ENCODE measurements at regions of chr1 and their contacts with region 1.

Region 1: DNA sequence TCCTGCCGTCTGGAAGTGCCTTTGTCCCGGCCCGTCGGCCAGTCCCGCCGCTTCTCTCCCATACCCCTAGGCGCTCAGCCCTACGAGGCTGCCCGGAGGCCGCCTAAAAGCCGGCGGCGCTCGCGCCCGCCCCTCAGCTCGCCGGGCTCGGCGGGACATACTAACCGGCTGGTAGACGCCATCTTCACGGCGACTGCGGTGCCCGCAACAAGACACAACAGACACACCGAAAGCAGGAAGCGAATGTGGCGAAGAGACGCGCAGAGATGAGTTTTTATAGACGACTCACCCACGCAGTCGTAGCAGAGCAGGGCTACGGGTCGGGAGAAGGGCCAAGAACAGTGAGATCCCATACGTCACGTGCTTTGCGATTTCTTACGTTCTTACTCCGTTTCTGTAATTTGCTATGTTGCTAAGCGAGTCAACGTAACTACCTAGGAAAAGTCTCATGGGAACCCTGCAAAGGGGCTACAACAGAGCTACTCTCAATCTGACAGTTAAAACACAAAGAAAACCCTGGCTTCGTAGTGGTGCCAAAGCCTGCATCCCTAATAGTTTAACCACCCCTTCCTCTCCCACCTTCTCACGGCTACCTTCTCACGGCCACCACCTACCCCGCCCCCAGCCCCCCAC is at the start of gene GTF2B:
- DNase-seq: peak; percentile 98
- ATAC-seq: peak; percentile 92
- H3K4me3 ChIP-seq: peak within 1 kb of the TSS; percentile 84 to 99 (median 89)
- H3K4me3 Mint-ChIP-seq: peak within 1 kb of the TSS; percentile 95
- H3K27ac ChIP-seq: peak within 1 kb of the TSS; percentile 83 to 89
- H3K27ac Mint-ChIP-seq: peak within 1 kb of the TSS; percentile 97
- H3K4me1 ChIP-seq: peaks cover 19 to 28% of the 10 kb centered on the region in 2 donors
- H3K4me1 Mint-ChIP-seq: peaks cover 39% of the 10 kb centered on the region
- H3K27me3 ChIP-seq: no peaks in the 10 kb centered on the region
- H3K27me3 Mint-ChIP-seq: no peaks in the 10 kb centered on the region
- CTCF ChIP-seq: no peak
- total RNA-seq, gene GTF2B: 32.0 and 36.8 TPM in 2 replicates

Region 2: DNA sequence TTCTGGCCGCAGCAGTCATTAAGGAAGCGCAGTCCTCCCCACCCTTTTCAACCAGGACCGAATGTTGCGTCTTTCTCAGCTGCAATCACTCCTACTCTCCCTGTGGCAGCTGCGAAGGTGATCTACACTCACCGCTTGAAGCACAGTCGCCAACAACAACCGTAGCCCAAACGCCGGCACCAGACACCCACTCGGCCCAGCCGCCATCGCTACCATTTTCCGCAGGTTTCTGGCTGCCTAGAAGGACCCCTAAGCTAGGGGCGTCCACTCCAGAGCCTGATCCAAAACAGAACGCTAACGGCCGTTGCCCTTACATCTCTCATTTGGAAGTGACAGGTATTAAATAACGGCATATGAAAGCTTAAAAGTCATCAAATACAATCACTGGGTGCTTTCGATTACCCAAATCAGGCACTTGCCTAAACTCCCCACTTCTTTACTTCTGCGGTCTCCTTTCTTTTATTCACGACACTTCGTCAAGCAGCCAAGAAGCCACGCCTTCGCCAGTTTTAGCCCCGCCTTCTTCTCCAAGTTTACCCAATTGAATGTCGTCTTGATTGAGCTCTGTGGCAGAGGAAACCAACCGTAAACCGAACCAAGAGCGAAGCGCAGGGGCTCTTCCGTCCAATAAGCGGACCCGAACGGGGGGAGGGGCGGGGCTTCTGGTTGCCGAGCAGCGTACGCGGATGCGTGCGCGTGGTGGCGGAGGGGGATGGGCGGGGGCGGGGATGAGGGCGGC is 1977.4 kb before region 1 on chr1 and contains the start of gene SELENOF:
- CTCF ChIA-PET with region 1: no interaction called
- POLR2A ChIA-PET with region 1: no interaction called
- intact Hi-C with region 1: loop called (anchors 2 kb)
- DNase-seq: peak; percentile 100
- ATAC-seq: peak; percentile 87
- H3K4me3 ChIP-seq: peak within 1 kb of the TSS; percentile 91 to 100 (median 94)
- H3K4me3 Mint-ChIP-seq: no peak within 1 kb of the TSS
- H3K27ac ChIP-seq: peak within 1 kb of the TSS; percentile 94 to 97
- H3K27ac Mint-ChIP-seq: no peak within 1 kb of the TSS
- H3K4me1 ChIP-seq: peaks cover 31 to 34% of the 10 kb centered on the region in 2 donors
- H3K4me1 Mint-ChIP-seq: peaks cover 48% of the 10 kb centered on the region
- H3K27me3 ChIP-seq: no peaks in the 10 kb centered on the region
- H3K27me3 Mint-ChIP-seq: no peaks in the 10 kb centered on the region
- CTCF ChIP-seq: no peak
- total RNA-seq, gene SELENOF: 178 and 185 TPM in 2 replicates

Region 3: DNA sequence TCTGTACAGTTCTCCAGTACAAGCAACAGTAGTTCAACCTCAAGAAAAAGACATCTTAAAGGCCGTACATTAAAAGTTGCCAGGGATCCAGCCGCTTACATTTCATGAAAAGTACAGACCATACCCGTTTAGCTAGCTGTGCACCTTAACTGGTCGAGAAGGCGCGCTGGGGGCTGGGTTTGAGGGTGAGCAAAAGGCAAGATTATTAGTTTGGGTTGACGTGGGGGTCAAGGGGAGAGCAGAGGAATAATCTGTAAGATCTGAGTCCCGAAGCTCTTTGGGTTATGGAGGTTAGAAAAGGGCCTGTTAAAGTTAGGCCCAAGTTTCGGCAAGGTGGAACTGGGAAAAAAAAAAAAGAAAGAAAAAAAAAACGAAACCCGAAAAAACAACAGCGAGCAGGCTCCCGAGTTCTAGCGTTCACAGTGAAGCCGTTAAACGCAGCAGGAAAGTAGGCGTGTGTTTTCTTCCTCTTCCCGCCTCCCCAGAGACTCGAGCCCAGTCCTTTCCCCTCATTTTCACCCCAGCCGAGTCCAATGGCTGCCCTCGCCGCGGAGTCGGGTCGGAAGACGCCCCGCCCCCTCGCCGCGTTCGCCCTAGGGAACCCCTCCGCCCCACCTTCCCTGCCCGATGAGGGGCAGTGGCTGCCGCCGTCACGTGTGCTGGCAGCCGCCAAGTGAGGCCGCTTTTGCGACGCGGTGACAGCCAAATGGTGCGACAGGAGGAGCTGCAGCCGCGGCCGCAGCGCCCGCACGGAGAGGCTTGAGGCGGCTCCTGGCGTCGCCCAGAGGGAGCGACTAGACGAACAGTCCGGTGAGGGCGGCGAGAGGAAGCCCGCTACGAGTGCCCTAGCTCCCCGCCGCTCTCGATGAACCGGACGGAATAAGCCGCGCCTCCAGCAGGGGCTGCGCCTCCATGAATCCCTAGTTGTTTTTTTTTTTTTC is 207.6 kb before region 1 on chr1 and contains the start of gene PKN2:
- CTCF ChIA-PET with region 1: interaction called, 3 read pairs
- POLR2A ChIA-PET with region 1: interaction called, 21 read pairs
- intact Hi-C with region 1: loop called (anchors 1 kb)
- DNase-seq: peak; percentile 98
- ATAC-seq: peak; percentile 90
- H3K4me3 ChIP-seq: peak within 1 kb of the TSS; percentile 81 to 97 (median 94)
- H3K4me3 Mint-ChIP-seq: peak within 1 kb of the TSS; percentile 95
- H3K27ac ChIP-seq: peak within 1 kb of the TSS; percentile 85 to 89
- H3K27ac Mint-ChIP-seq: peak within 1 kb of the TSS; percentile 98
- H3K4me1 ChIP-seq: peaks cover 11 to 19% of the 10 kb centered on the region in 2 donors
- H3K4me1 Mint-ChIP-seq: peaks cover 28% of the 10 kb centered on the region
- H3K27me3 ChIP-seq: no peaks in the 10 kb centered on the region
- H3K27me3 Mint-ChIP-seq: no peaks in the 10 kb centered on the region
- CTCF ChIP-seq: no peak
- total RNA-seq, gene PKN2: 51.6 and 57.9 TPM in 2 replicates

Region 4: GRCh38 chr1:88990426-88990825 is 99.0 kb after region 1 on chr1:
- CTCF ChIA-PET with region 1: no interaction called
- POLR2A ChIA-PET with region 1: interaction called, 6 read pairs
- intact Hi-C with region 1: loop called (anchors 1 kb)
- DNase-seq: no peak
- ATAC-seq: no peak
- H3K4me3 ChIP-seq: no peak overlapping the region
- H3K4me3 Mint-ChIP-seq: peak overlapping the region; percentile 8
- H3K27ac ChIP-seq: no peak overlapping the region
- H3K27ac Mint-ChIP-seq: peak overlapping the region; percentile 44
- H3K4me1 ChIP-seq: peaks cover 16 to 24% of the 10 kb centered on the region in 2 donors
- H3K4me1 Mint-ChIP-seq: peaks cover 30% of the 10 kb centered on the region
- H3K27me3 ChIP-seq: no peaks in the 10 kb centered on the region
- H3K27me3 Mint-ChIP-seq: no peaks in the 10 kb centered on the region
- CTCF ChIP-seq: no peak

Region 5: GRCh38 chr1:89843281-89844121 is 952.1 kb after region 1 on chr1:
- CTCF ChIA-PET with region 1: no interaction called
- POLR2A ChIA-PET with region 1: no interaction called
- intact Hi-C with region 1: loop called (anchors 5 kb)
- DNase-seq: peak; percentile 85
- ATAC-seq: peak; percentile 93
- H3K4me3 ChIP-seq: peak overlapping the region; percentile 48 to 84 (median 70)
- H3K4me3 Mint-ChIP-seq: peak overlapping the region; percentile 90
- H3K27ac ChIP-seq: peak overlapping the region; percentile 42 to 75
- H3K27ac Mint-ChIP-seq: peak overlapping the region; percentile 74
- H3K4me1 ChIP-seq: peaks cover 28 to 30% of the 10 kb centered on the region in 2 donors
- H3K4me1 Mint-ChIP-seq: peaks cover 49% of the 10 kb centered on the region
- H3K27me3 ChIP-seq: no peaks in the 10 kb centered on the region
- H3K27me3 Mint-ChIP-seq: no peaks in the 10 kb centered on the region
- CTCF ChIP-seq: peak; percentile 85